ENCODE measurements at regions of chr17 and their contacts with region 1.

Region 1: GRCh38 chr17:76384222-76384986 is at the start of gene SPHK1:
- DNase-seq: peak; percentile 74
- ATAC-seq: peak; percentile 49
- H3K4me3 ChIP-seq: peak within 1 kb of the TSS; percentile 72 to 90 (median 86)
- H3K27ac ChIP-seq: peak within 1 kb of the TSS; percentile 100
- H3K4me1 ChIP-seq: peaks cover 55% of the 10 kb centered on the region
- H3K27me3 ChIP-seq: no peaks in the 10 kb centered on the region; a peak in 1 of 5 replicates
- CTCF ChIP-seq: no peak; the same call in none of the 2 replicates
- EP300 ChIP-seq: 0 out of 4 replicates have a peak, but pooled peaks of 1 of the 2 experiments have one; percentile 3
- POLR2A ChIP-seq: peak in 1 of 2 experiments; percentile 92; a peak in 2 of 4 replicates
- RAD21 ChIP-seq: peak; percentile 65; the same call in 1 of the 2 replicates
- total RNA-seq, gene SPHK1: 111 and 160 TPM in 2 replicates

Region 2: DNA sequence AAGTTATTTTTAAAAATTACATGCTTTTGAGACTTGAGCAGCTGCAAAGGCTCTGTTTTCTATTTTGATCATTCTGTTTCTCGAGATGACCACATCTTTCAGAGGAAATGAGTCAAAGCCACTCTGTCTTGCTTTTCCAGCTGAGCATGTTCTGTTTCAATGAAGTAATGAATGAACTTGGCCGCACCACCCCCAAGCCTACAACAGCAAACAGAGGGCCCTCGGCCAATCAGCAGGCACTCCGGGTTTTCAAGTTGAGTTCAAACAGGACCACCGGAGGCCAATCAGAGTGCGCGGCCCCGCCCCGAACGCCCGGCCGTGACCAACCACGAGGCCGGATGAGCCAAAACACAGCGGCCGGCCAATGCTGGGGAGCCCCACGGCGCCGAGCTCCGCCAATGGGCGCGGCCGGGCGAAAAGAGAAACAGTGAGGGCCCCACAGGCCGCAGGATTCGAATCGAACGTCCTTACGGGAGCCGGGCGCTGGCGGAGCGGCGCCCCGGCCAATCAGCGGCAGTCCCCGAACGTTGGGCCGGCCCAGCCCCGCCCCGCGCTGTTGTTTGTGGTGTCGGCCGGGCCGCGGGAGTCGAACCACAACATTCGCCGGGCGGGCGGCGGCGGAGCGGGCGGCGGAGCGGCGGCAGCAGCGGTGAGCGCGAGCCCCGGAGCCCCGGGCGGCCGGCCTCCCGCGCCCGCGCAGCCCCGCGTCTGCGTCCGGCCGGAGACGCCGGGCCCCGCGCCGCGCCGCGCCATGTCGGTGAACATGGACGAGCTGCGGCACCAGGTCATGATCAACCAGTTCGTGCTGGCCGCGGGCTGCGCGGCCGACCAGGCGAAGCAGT is 119.4 kb before region 1 on chr17 and contains the start of gene UBALD2:
- CTCF ChIA-PET with region 1: no interaction called
- POLR2A ChIA-PET with region 1: interaction called, 11 read pairs
- in situ Hi-C with region 1: no loop called
- intact Hi-C with region 1: no loop called
- DNase-seq: peak; percentile 98
- ATAC-seq: peak; percentile 96
- H3K4me3 ChIP-seq: peak within 1 kb of the TSS; percentile 88 to 98 (median 92)
- H3K27ac ChIP-seq: peak within 1 kb of the TSS; percentile 63
- H3K4me1 ChIP-seq: peaks cover 76% of the 10 kb centered on the region
- H3K27me3 ChIP-seq: no peaks in the 10 kb centered on the region
- CTCF ChIP-seq: no peak
- EP300 ChIP-seq: 0 out of 4 replicates have a peak, but pooled peaks have one; percentile 15 to 21
- POLR2A ChIP-seq: peak; percentile 55; a peak in 2 of 4 replicates
- RAD21 ChIP-seq: peak; percentile 15; the same call in 1 of the 2 replicates
- total RNA-seq, gene UBALD2: 3.3 and 5.3 TPM in 2 replicates

Region 3: DNA sequence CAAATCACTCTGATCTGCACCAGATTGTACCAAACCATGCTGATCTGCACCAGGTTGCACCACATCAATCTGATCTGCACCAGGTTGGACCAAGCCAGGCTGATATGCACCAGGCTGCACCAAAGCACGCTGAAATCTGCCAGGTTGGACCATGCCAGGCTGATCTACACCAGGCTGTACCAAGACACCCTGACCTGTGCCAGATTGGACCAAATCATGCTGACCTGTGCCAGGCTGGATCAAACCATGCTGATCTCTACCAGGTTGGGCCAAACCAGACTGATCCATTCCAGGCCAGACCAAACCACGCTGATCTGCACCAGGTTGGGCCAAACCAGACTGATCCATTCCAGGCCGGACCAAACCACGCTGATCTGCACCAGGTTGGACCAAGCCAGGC is 91.8 kb before region 1 on chr17:
- CTCF ChIA-PET with region 1: no interaction called
- POLR2A ChIA-PET with region 1: no interaction called
- in situ Hi-C with region 1: no loop called
- intact Hi-C with region 1: no loop called
- DNase-seq: no peak
- ATAC-seq: no peak
- H3K4me3 ChIP-seq: no peak overlapping the region
- H3K27ac ChIP-seq: no peak overlapping the region
- H3K4me1 ChIP-seq: no peaks in the 10 kb centered on the region
- H3K27me3 ChIP-seq: no peaks in the 10 kb centered on the region
- CTCF ChIP-seq: no peak
- EP300 ChIP-seq: no peak
- POLR2A ChIP-seq: no peak
- RAD21 ChIP-seq: no peak

Region 4: GRCh38 chr17:76307299-76307965 is 77.0 kb before region 1 on chr17:
- CTCF ChIA-PET with region 1: interaction called, 4 read pairs
- POLR2A ChIA-PET with region 1: interaction called, 79 read pairs
- in situ Hi-C with region 1: no loop called
- intact Hi-C with region 1: no loop called
- DNase-seq: no peak
- ATAC-seq: peak; percentile 16
- H3K4me3 ChIP-seq: no peak overlapping the region
- H3K27ac ChIP-seq: no peak overlapping the region
- H3K4me1 ChIP-seq: no peaks in the 10 kb centered on the region
- H3K27me3 ChIP-seq: no peaks in the 10 kb centered on the region
- CTCF ChIP-seq: no peak
- EP300 ChIP-seq: no peak
- POLR2A ChIP-seq: peak in 1 of 2 experiments; percentile 43; a peak in 1 of 4 replicates
- RAD21 ChIP-seq: no peak

Region 5: DNA sequence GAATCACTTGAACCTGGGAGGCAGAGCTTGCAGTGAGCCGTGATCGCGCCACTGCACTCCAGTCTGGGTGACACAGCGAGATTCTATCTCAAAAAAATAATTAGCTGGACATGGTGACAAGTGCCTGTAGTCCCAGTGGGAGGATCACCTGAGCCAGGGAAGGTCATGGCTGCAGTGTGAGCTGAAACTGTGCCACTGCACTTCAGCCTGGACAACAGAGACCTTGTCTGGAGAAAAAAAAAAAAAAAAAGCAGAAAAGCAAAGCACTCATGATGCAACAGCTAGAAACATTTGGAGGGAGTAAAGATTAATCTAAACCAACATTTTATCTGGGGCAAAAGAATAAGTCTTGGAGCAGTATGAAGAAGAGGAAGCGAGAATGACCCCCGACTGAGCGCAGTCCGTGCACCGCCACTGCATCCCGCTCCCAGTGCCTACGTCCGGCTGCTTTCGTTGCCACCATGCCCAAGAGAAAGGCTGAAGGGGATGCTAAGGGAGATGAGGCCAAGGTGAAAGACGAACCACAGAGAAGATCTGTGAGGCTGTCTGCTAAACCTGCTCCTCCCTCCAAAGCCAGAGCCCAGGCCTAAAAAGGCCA is 38.9 kb before region 1 on chr17:
- CTCF ChIA-PET with region 1: no interaction called
- POLR2A ChIA-PET with region 1: interaction called, 1,379 read pairs
- in situ Hi-C with region 1: loop called (anchors 5 kb)
- intact Hi-C with region 1: no loop called
- DNase-seq: peak; percentile 75
- ATAC-seq: peak; percentile 91
- H3K4me3 ChIP-seq: no peak overlapping the region
- H3K27ac ChIP-seq: peak overlapping the region; percentile 77
- H3K4me1 ChIP-seq: peaks cover 42% of the 10 kb centered on the region
- H3K27me3 ChIP-seq: no peaks in the 10 kb centered on the region
- CTCF ChIP-seq: no peak; the same call in 1 of the 2 replicates
- EP300 ChIP-seq: peak in 1 of 2 experiments; percentile 58; a peak in 2 of 4 replicates
- POLR2A ChIP-seq: no peak
- RAD21 ChIP-seq: no peak

Region 6: DNA sequence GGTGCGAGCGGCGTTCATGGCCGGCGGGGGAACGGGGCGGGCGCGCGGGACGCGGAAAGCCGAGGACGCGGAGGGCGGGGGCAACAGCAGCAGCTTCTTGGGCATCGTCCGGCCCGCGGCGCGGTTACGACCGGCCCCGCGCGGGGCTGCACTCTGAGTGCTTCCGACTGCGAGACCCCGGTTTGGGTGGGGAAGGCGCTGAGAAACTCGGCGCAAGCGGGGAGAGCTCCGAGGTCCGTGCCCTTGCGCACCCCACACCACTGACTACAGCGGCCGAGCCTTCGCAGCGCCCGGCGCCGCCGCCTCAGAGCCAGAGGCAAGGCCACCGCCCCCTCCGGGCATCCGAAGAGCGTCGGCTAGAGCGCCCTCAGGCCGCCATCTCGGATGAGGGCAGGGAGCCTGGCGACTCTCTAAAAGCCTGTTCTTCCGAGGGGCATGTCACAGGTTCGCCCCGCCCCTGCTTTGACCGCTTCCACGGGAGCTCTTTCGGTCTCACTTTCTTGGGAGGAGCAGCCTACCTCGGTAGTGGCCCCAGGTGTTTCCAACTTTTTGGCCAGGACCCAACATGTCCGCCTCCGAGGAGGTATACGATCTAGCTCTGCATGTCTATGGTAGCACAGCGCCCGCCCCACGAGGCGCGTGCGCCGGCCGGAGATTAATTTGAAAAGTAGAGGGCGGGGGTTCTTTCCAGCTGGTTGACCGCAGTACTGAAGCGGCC is 30.6 kb before region 1 on chr17 and contains the start of gene PRPSAP1:
- CTCF ChIA-PET with region 1: interaction called, 6 read pairs
- POLR2A ChIA-PET with region 1: interaction called, 1,379 read pairs
- in situ Hi-C with region 1: loop called (anchors 5 kb)
- intact Hi-C with region 1: loop called (anchors 2 kb)
- DNase-seq: peak; percentile 90
- ATAC-seq: peak; percentile 88
- H3K4me3 ChIP-seq: peak within 1 kb of the TSS; percentile 87 to 99 (median 98)
- H3K27ac ChIP-seq: peak within 1 kb of the TSS; percentile 99
- H3K4me1 ChIP-seq: peaks cover 59% of the 10 kb centered on the region
- H3K27me3 ChIP-seq: no peaks in the 10 kb centered on the region; a peak in 1 of 5 replicates
- CTCF ChIP-seq: peak; percentile 51
- EP300 ChIP-seq: peak in 1 of 2 experiments; percentile 3; a peak in 1 of 4 replicates
- POLR2A ChIP-seq: peak; percentile 98 to 100
- RAD21 ChIP-seq: peak; percentile 67
- total RNA-seq, gene PRPSAP1: 91.1 and 115 TPM in 2 replicates

Region 7: GRCh38 chr17:76370261-76370993 is 14.0 kb before region 1 on chr17:
- CTCF ChIA-PET with region 1: interaction called, 12 read pairs
- POLR2A ChIA-PET with region 1: interaction called, 1,379 read pairs
- in situ Hi-C with region 1: no loop called
- intact Hi-C with region 1: loop called (anchors 2 kb)
- DNase-seq: no peak
- ATAC-seq: peak; percentile 33; the same call in 2 of the 3 replicates
- H3K4me3 ChIP-seq: no peak overlapping the region
- H3K27ac ChIP-seq: no peak overlapping the region
- H3K4me1 ChIP-seq: peaks cover 90% of the 10 kb centered on the region
- H3K27me3 ChIP-seq: no peaks in the 10 kb centered on the region
- CTCF ChIP-seq: peak; percentile 58
- EP300 ChIP-seq: no peak
- POLR2A ChIP-seq: no peak
- RAD21 ChIP-seq: peak; percentile 52; the same call in 1 of the 2 replicates

Region 8: GRCh38 chr17:76397687-76398487 is 13.5 kb after region 1 on chr17:
- CTCF ChIA-PET with region 1: interaction called, 4 read pairs
- POLR2A ChIA-PET with region 1: interaction called, 18 read pairs
- in situ Hi-C with region 1: no loop called
- intact Hi-C with region 1: loop called (anchors 1 kb)
- DNase-seq: peak; percentile 80
- ATAC-seq: peak; percentile 87
- H3K4me3 ChIP-seq: no peak overlapping the region
- H3K27ac ChIP-seq: no peak overlapping the region
- H3K4me1 ChIP-seq: no peaks in the 10 kb centered on the region
- H3K27me3 ChIP-seq: no peaks in the 10 kb centered on the region
- CTCF ChIP-seq: peak; percentile 99
- EP300 ChIP-seq: no peak
- POLR2A ChIP-seq: no peak
- RAD21 ChIP-seq: peak; percentile 96

Region 9: DNA sequence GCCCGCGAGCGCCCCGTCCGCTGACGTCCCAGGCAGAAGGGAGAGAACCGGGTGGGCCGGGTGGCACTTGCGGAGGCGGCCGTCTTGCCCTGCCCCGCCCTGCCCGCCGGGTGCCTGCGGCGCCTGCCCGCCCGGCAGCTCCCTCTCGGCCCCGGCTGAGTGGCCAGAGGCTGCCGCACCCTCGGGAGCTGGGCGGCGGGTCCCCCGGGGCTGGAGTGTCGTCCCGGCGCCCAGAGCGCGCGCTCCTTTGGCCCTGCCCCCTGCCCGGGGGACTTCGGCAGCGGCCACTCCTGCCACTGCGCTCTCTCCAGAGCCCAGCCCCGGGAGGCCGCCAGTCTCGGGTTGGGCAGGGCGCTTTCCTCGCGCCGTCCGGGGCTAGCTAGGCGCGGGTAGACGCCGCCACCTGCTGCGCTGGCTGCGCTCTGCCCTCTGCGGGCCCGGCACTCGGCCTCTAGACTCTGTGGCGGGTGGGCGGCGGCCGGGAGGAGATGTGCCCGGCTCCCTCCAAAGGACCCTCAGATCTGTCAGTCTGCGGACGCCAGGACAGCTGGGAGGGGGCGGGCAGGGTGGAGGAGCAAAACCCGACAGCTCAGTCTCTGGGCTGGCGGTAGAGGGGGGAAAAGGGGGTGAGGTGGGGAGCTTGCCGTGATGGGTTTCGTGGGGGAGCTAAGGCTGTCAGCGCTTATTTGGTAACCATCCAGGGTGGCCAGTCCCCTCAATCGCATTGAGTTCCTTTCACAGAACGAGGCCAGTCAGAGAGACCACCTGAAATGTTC is 201.6 kb after region 1 on chr17 and contains the start of gene ST6GALNAC2:
- CTCF ChIA-PET with region 1: no interaction called
- POLR2A ChIA-PET with region 1: no interaction called
- in situ Hi-C with region 1: no loop called
- intact Hi-C with region 1: no loop called
- DNase-seq: peak; percentile 66
- ATAC-seq: peak; percentile 93
- H3K4me3 ChIP-seq: peak within 1 kb of the TSS; percentile 55 to 72 (median 58)
- H3K27ac ChIP-seq: no peak within 1 kb of the TSS
- H3K4me1 ChIP-seq: peaks cover 53% of the 10 kb centered on the region
- H3K27me3 ChIP-seq: peaks cover 11 to 40% of the 10 kb centered on the region in 2 experiments; a peak in 4 of 5 replicates
- CTCF ChIP-seq: peak; percentile 90
- EP300 ChIP-seq: no peak
- POLR2A ChIP-seq: no peak
- RAD21 ChIP-seq: peak; percentile 98
- total RNA-seq, gene ST6GALNAC2: 0.49 and 0.84 TPM in 2 replicates

Measured in HepG2 (cell line).